OCI-LY7 (cell line): ENCODE measurements at regions of chr2 and their contacts with region 1.

Region 1: GRCh38 chr2:149040451-149040850 is 2.0 kb downstream of the LYPD6B start:
- DNase-seq: peak; percentile 68
- H3K4me3 ChIP-seq: no peak overlapping the region
- H3K27ac ChIP-seq: no peak overlapping the region
- H3K4me1 ChIP-seq: peaks cover 10% of the 10 kb centered on the region
- CTCF ChIP-seq: peak; percentile 85

Region 2: GRCh38 chr2:149313512-149313972 is 273.1 kb after region 1 on chr2:
- CTCF ChIA-PET with region 1: no interaction called
- POLR2A ChIA-PET with region 1: no interaction called
- intact Hi-C with region 1: loop called (anchors 1 kb)
- DNase-seq: peak; percentile 60
- H3K4me3 ChIP-seq: no peak overlapping the region
- H3K27ac ChIP-seq: no peak overlapping the region
- H3K4me1 ChIP-seq: no peaks in the 10 kb centered on the region
- CTCF ChIP-seq: peak; percentile 91

Region 3: GRCh38 chr2:149561309-149561926 is 521.0 kb after region 1 on chr2:
- CTCF ChIA-PET with region 1: no interaction called
- POLR2A ChIA-PET with region 1: no interaction called
- intact Hi-C with region 1: loop called (anchors 5 kb)
- DNase-seq: peak; percentile 49
- H3K4me3 ChIP-seq: no peak overlapping the region
- H3K27ac ChIP-seq: no peak overlapping the region
- H3K4me1 ChIP-seq: peaks cover 8% of the 10 kb centered on the region
- CTCF ChIP-seq: peak; percentile 99